PC-3 (cell line): ENCODE measurements at regions of chr7 and their contacts with region 1.

Region 1: GRCh38 chr7:78134256-78134655 is 335.7 kb downstream of the PHTF2 start:
- DNase-seq: peak; percentile 63
- ATAC-seq: peak; percentile 55; the same call in 1 of the 2 replicates
- H3K4me3 ChIP-seq: no peak overlapping the region
- H3K27ac ChIP-seq: no peak overlapping the region
- H3K4me1 ChIP-seq: no peaks in the 10 kb centered on the region
- H3K27me3 ChIP-seq: peaks cover 33% of the 10 kb centered on the region
- CTCF ChIP-seq: peak; percentile 65

Region 2: DNA sequence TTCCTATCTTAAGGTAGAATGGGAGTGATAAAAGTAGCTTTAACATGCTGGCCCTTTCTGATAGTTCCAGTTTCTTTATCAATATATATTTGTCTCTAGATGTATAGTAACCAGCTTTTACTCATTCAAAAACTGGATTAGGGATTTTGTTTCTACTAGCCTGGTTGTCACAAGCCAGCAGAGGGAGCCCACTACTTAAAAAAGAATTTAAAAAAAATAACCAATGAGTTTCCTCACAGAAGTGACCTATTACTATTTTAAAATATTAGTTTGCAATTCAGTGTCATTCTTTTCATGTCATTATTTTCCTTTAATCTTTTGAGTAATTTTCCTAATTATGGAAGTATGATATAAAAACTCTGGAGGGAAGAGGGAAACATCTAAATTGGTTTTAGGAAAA is 193.6 kb before region 1 on chr7:
- CTCF ChIA-PET with region 1: no interaction called
- POLR2A ChIA-PET with region 1: no interaction called
- intact Hi-C with region 1: loop called (anchors 10 kb)
- DNase-seq: peak; percentile 45
- ATAC-seq: peak; percentile 59
- H3K4me3 ChIP-seq: no peak overlapping the region
- H3K27ac ChIP-seq: no peak overlapping the region
- H3K4me1 ChIP-seq: no peaks in the 10 kb centered on the region
- H3K27me3 ChIP-seq: no peaks in the 10 kb centered on the region
- CTCF ChIP-seq: peak; percentile 79

Region 3: GRCh38 chr7:78434281-78434680 is 300.0 kb after region 1 on chr7:
- CTCF ChIA-PET with region 1: interaction called, 4 read pairs
- POLR2A ChIA-PET with region 1: no interaction called
- intact Hi-C with region 1: loop called (anchors 1 kb)
- DNase-seq: no peak
- ATAC-seq: peak; percentile 37; the same call in 1 of the 2 replicates
- H3K4me3 ChIP-seq: no peak overlapping the region
- H3K27ac ChIP-seq: no peak overlapping the region
- H3K4me1 ChIP-seq: no peaks in the 10 kb centered on the region
- H3K27me3 ChIP-seq: peaks cover 51% of the 10 kb centered on the region
- CTCF ChIP-seq: peak; percentile 39; the same call in 1 of the 2 replicates